SK-N-SH (cell line): ENCODE measurements at regions of chr3 and their contacts with region 1.

Region 1: GRCh38 chr3:159884661-159885402 is 103.8 kb upstream of the IL12A start:
- DNase-seq: peak; percentile 52
- H3K4me3 ChIP-seq: no peak overlapping the region
- H3K27ac ChIP-seq: peak overlapping the region in 1 of 2 experiments; percentile 97; a peak in 2 of 4 replicates
- H3K4me1 ChIP-seq: peaks cover 32 to 51% of the 10 kb centered on the region in 2 experiments
- H3K27me3 ChIP-seq: no peaks in the 10 kb centered on the region
- CTCF ChIP-seq: peak; percentile 73
- EP300 ChIP-seq: no peak
- RAD21 ChIP-seq: peak; percentile 73

Region 2: GRCh38 chr3:159751146-159751545 is 133.7 kb before region 1 on chr3:
- CTCF ChIA-PET with region 1: no interaction called
- POLR2A ChIA-PET with region 1: no interaction called
- DNase-seq: no peak
- H3K4me3 ChIP-seq: no peak overlapping the region
- H3K27ac ChIP-seq: no peak overlapping the region
- H3K4me1 ChIP-seq: no peaks in the 10 kb centered on the region
- H3K27me3 ChIP-seq: no peaks in the 10 kb centered on the region
- CTCF ChIP-seq: no peak
- EP300 ChIP-seq: no peak
- RAD21 ChIP-seq: no peak

Region 3: DNA sequence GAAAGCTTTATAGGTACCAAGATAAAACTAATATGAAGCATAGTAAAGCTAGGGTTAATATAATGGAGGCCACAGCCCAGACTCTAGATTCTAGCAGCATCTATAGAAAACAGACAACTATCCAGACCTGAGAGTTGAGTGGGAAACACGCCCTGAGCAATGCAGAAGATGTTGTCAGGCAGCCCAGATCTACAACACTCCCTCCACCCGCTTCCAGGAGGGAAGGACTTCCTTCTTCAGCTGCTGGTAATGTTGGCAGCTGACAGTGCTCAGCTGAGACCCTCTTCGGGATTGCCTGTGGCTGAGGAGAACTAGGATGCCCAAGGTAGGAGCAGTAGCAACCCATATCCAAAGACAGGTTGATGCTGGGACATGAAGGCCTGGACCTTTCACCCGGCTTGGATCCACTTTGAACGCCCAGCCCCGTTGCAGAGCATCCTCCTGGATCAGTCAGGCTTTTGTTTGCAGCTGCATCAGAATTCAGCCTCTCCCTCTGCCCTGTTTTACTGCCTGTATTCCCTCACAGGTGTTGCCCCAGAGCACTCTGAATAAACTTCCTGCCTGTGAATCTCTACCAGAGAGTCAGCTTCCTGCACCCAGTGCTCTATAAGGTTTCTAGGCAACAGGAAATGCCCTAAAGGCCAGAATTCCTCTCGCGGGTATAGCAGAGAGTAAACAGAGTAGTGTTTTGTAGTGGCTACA is 70.9 kb before region 1 on chr3:
- CTCF ChIA-PET with region 1: interaction called, 30 read pairs
- POLR2A ChIA-PET with region 1: interaction called, 3 read pairs
- DNase-seq: no peak
- H3K4me3 ChIP-seq: no peak overlapping the region
- H3K27ac ChIP-seq: no peak overlapping the region
- H3K4me1 ChIP-seq: peaks cover 0 to 15% of the 10 kb centered on the region in 2 experiments; a peak in 1 of 4 replicates
- H3K27me3 ChIP-seq: no peaks in the 10 kb centered on the region
- CTCF ChIP-seq: no peak
- EP300 ChIP-seq: no peak
- RAD21 ChIP-seq: no peak

Region 4: GRCh38 chr3:159852821-159853505 is 31.9 kb before region 1 on chr3:
- CTCF ChIA-PET with region 1: interaction called, 60 read pairs
- POLR2A ChIA-PET with region 1: interaction called, 23 read pairs
- DNase-seq: no peak
- H3K4me3 ChIP-seq: peak overlapping the region; percentile 39 to 53
- H3K27ac ChIP-seq: peak overlapping the region; percentile 93 to 100
- H3K4me1 ChIP-seq: peaks cover 30 to 72% of the 10 kb centered on the region in 2 experiments
- H3K27me3 ChIP-seq: no peaks in the 10 kb centered on the region
- CTCF ChIP-seq: no peak
- EP300 ChIP-seq: no peak
- RAD21 ChIP-seq: no peak

Region 5: GRCh38 chr3:159872374-159873109 is 12.3 kb before region 1 on chr3:
- CTCF ChIA-PET with region 1: interaction called, 29 read pairs
- POLR2A ChIA-PET with region 1: interaction called, 7 read pairs
- DNase-seq: no peak
- H3K4me3 ChIP-seq: no peak overlapping the region
- H3K27ac ChIP-seq: peak overlapping the region; percentile 53 to 73; a peak in 3 of 4 replicates
- H3K4me1 ChIP-seq: peaks cover 16 to 17% of the 10 kb centered on the region in 2 experiments
- H3K27me3 ChIP-seq: no peaks in the 10 kb centered on the region
- CTCF ChIP-seq: peak; percentile 49
- EP300 ChIP-seq: peak in 1 of 2 experiments; percentile 79; a peak in 2 of 4 replicates
- RAD21 ChIP-seq: no peak

Region 6: GRCh38 chr3:159988617-159989271 is 103.9 kb after region 1 on chr3 and contains the start of gene IL12A:
- CTCF ChIA-PET with region 1: interaction called, 39 read pairs
- POLR2A ChIA-PET with region 1: no interaction called
- DNase-seq: peak; percentile 92
- H3K4me3 ChIP-seq: peak within 1 kb of the TSS; percentile 71 to 87
- H3K27ac ChIP-seq: no peak within 1 kb of the TSS
- H3K4me1 ChIP-seq: peaks cover 0 to 5% of the 10 kb centered on the region in 2 experiments; a peak in 1 of 4 replicates
- H3K27me3 ChIP-seq: no peaks in the 10 kb centered on the region
- CTCF ChIP-seq: peak; percentile 97
- EP300 ChIP-seq: no peak
- RAD21 ChIP-seq: peak; percentile 50
- polyA plus RNA-seq, gene IL12A: 0.97 and 1.9 TPM in 2 replicates

Region 7: DNA sequence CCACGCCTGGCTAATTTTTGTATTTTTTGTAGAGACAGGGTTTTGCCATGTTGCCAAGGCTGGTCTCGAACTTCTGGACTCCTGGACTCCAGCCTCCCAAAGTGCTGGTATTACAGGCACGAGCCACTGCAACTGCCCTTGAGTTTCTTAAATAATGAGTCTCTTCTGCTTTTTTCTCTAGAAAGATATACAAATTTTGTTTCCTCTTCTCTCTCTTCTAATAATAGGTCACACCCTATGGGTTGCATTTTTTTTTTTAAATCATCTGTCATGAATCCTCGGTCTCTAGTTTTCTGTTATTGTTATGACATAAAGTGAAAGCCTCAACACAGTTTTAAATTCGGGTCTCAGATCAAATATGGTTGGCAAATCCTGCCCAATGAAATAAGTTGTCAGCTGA is 215.0 kb after region 1 on chr3:
- CTCF ChIA-PET with region 1: no interaction called
- POLR2A ChIA-PET with region 1: no interaction called
- DNase-seq: no peak
- H3K4me3 ChIP-seq: no peak overlapping the region
- H3K27ac ChIP-seq: no peak overlapping the region
- H3K4me1 ChIP-seq: no peaks in the 10 kb centered on the region
- H3K27me3 ChIP-seq: no peaks in the 10 kb centered on the region
- CTCF ChIP-seq: no peak
- EP300 ChIP-seq: no peak
- RAD21 ChIP-seq: no peak